Common myeloid progenitor, CD34-positive (primary cell): ENCODE measurements at regions of chr2 and their contacts with region 1.

Region 1: DNA sequence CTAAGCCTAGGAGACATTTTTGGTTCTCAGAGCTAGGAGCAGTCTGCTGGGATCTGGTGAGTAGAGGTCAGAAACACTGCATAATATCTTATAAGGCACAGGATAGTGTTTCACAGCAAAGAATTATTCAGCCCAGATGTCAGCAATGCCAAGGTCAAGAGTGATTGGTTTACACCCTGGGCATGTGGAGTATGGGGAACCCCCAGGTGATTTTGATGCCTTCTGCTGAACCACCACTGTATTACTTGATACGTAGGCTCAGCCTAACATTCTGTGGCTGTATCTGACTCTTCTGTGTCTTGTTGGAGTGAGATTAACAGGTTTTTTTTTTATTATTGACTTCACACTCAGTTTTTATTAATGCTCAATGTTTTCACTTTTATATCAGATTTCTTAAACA is 6.0 kb downstream of the DDX18 start:
- DNase-seq: no peak
- H3K4me3 ChIP-seq: no peak overlapping the region
- H3K27ac ChIP-seq: peak overlapping the region; percentile 8 to 23
- H3K4me1 ChIP-seq: peaks cover under 1 to 9% (median 6%) of the 10 kb centered on the region in 4 experiments
- H3K27me3 ChIP-seq: no peaks in the 10 kb centered on the region

Region 2: DNA sequence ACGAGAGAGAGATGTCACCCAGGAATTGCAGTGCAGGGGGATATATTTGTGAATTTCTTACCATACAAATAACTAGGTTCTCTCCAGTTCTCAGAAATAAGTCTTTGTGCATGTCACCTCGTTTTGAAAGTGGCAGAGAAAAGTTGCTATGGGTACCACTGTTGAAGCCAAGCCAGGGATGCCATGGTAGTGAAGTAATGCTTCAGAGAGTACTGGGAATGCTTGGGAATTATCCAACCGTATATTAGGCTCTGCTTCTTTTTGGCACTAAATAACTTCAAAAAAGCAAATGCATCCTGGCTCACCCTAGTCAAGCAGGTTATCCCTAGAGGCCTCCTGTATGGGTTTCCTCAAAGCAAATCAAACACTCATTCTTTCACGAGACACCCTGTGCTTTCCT is 56.6 kb before region 1 on chr2:
- CTCF ChIA-PET with region 1: no interaction called
- POLR2A ChIA-PET with region 1: no interaction called
- DNase-seq: no peak
- H3K4me3 ChIP-seq: no peak overlapping the region
- H3K27ac ChIP-seq: no peak overlapping the region
- H3K4me1 ChIP-seq: no peaks in the 10 kb centered on the region
- H3K27me3 ChIP-seq: peaks cover 0 to 4% (median 0%) of the 10 kb centered on the region in 5 experiments

Region 3: GRCh38 chr2:117835990-117836760 is 15.7 kb after region 1 on chr2:
- CTCF ChIA-PET with region 1: interaction called, 17 read pairs
- POLR2A ChIA-PET with region 1: no interaction called
- DNase-seq: peak; percentile 73 to 78 (median 76)
- H3K4me3 ChIP-seq: peak overlapping the region in 6 of 7 experiments; percentile 15 to 77 (median 60)
- H3K27ac ChIP-seq: no peak overlapping the region
- H3K4me1 ChIP-seq: peaks cover 0 to 9% (median 7%) of the 10 kb centered on the region in 4 experiments
- H3K27me3 ChIP-seq: peaks cover 0 to 9% (median 4%) of the 10 kb centered on the region in 5 experiments

Region 4: DNA sequence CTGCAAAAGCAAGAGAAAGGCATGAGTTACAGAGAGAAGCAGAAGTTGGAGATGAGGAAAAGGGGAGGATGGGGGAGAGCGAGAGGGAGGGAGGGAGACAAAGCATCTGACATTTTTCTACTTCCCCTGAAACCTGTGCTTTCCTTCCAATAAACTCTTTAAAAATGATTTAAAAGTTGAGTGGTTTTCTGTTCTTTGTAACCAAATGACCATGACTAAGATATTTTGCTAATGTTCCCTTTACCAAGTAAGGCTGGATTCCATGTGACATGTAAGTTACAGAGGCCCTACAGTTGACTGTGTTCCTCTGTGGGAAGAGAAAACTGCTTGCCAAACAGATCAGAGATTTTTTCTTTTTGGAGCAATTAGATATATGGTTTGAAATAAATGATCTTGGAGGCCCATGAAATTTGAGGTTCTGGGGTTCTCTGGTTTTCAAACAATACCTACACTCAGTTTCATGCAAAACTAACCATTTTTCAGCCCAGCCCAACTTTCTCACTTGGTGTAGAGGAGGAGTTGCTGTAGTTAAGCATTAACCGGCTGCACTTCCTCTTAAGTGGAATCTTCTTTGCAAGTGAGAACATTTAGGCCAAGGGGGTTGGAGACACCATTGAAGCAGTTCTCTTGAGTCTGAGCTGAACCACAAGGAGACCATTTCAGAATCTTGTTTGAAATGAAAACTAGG is 302.3 kb after region 1 on chr2:
- CTCF ChIA-PET with region 1: no interaction called
- POLR2A ChIA-PET with region 1: no interaction called
- DNase-seq: peak; percentile 28 to 79 (median 69)
- H3K4me3 ChIP-seq: no peak overlapping the region
- H3K27ac ChIP-seq: no peak overlapping the region
- H3K4me1 ChIP-seq: peaks cover 13 to 62% (median 40%) of the 10 kb centered on the region in 4 experiments
- H3K27me3 ChIP-seq: no peaks in the 10 kb centered on the region